PC-9 (cell line): ENCODE measurements at regions of chr11 and their contacts with region 1.

Region 1: DNA sequence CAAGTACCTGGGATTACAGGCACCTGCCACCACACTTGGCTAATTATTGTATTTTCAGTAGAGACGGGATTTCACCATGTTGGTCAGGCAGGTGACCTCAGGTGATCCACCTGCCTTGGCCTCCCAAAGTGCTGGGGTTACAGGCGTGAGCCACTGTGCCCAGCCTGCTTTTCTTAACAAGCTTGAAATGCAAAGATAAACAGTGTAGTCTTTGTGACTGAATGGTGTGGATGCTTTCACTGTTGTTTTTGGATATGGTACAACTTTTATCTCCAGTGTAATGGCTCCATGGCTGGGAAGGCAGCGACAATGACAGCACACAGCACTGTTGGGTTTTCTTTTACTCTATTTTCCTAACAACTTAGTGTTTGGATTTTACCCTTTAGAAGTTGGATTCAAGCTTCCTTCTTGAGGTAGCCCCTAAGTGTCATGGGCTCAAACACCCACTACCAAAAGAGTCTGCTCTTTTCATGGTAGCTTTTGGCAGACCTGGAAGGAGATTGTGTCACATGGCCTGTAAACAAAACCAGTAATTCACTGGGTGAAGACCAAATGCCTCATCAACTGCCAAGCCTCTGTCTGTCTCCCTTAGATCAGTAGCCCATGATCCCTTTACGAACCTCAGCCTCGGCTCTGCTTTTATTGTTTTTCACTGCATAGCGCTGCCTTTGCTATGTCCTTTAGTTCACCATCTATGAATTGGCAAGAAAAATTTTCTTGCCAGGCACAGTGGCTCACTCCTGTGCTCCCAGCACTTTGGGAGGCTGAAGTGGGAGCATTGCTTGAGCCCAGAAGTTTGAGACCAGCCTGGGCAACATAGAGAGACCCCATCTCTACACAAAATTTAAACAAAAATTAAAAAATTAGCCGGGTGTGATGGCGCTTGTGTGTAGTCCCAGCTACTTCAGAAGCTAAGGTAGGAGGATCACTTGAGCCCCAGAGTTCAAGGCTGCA is 6.4 kb downstream of the VPS51 start:
- DNase-seq: no peak
- H3K4me3 ChIP-seq: no peak overlapping the region
- H3K27ac ChIP-seq: no peak overlapping the region
- H3K4me1 ChIP-seq: peaks cover 10% of the 10 kb centered on the region
- H3K27me3 ChIP-seq: no peaks in the 10 kb centered on the region
- CTCF ChIP-seq: no peak

Region 2: DNA sequence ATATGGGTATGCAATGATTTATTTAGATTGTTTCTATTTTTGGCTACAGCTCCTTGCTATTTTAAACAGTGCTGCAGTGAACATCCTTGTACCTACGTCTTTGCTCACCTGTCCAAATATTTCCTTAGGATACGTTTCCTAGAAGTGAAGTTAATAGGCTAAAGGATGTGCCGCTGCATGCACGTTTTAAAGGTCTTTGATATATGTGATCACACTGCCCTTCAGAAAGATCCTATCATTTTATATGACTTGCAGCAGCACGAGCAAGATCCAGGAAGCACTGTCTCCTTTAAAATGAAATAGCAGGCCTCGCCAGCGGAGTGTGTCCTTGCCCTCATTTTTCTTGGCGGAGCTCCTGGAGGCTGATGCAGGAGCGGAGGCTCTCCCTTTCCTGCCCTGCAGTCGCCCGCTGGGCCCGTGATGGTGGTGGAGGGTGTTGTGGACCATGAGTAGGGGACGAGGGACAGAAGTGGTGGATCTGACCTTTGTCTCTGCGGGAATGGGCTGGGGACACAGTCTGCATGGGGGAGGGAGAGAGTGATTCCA is 724.0 kb before region 1 on chr11:
- CTCF ChIA-PET with region 1: interaction called, 15 read pairs
- POLR2A ChIA-PET with region 1: no interaction called
- intact Hi-C with region 1: no loop called
- DNase-seq: no peak
- H3K4me3 ChIP-seq: no peak overlapping the region
- H3K27ac ChIP-seq: no peak overlapping the region
- H3K4me1 ChIP-seq: peaks cover 11% of the 10 kb centered on the region
- H3K27me3 ChIP-seq: no peaks in the 10 kb centered on the region
- CTCF ChIP-seq: no peak

Region 3: GRCh38 chr11:64688534-64688982 is 413.9 kb before region 1 on chr11:
- CTCF ChIA-PET with region 1: no interaction called
- POLR2A ChIA-PET with region 1: no interaction called
- intact Hi-C with region 1: no loop called
- DNase-seq: peak; percentile 60 to 89
- H3K4me3 ChIP-seq: peak overlapping the region; percentile 45; the same call in 1 of the 2 replicates
- H3K27ac ChIP-seq: no peak overlapping the region
- H3K4me1 ChIP-seq: no peaks in the 10 kb centered on the region
- H3K27me3 ChIP-seq: peaks cover 54% of the 10 kb centered on the region
- CTCF ChIP-seq: peak; percentile 94

Region 4: DNA sequence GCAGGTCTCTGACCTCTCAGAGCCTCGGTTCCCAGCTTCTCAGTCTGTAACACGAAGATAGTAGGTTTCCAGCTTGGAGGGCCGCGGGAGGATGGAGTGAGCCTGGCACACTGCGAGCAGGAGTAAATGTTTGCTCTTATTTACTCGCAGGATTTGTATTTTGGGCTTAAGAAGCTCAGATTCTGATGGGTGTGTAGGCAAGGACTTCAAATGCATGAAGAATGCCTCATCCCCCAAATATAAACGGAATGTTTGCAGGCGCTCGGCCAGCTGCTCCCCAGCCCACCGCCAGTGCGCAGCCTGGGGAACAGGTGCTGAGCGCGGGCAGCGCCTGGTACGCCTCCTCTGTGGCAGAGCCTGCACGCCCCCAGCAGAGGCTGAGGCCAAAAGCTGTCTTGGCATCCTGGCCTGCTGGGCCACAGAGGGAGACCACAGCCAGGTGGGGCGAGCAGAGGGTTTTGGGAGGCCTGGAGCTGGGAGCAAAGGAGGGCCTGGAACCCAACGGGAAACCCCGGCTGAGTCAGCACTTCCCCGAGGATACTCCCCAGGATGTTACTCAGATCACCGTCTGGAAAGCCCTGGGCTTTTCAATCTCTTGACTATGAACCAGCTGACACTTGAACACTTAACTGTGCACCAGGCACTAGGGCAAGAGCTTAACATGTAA is 233.4 kb before region 1 on chr11:
- CTCF ChIA-PET with region 1: no interaction called
- POLR2A ChIA-PET with region 1: no interaction called
- intact Hi-C with region 1: no loop called
- DNase-seq: peak; percentile 55 to 88
- H3K4me3 ChIP-seq: no peak overlapping the region
- H3K27ac ChIP-seq: 0 out of 2 replicates have a peak overlapping the region, but pooled peaks have one; percentile 17
- H3K4me1 ChIP-seq: peaks cover 57% of the 10 kb centered on the region
- H3K27me3 ChIP-seq: no peaks in the 10 kb centered on the region
- CTCF ChIP-seq: no peak

Region 5: GRCh38 chr11:65169164-65169641 is 66.8 kb after region 1 on chr11:
- CTCF ChIA-PET with region 1: no interaction called
- POLR2A ChIA-PET with region 1: no interaction called
- intact Hi-C with region 1: no loop called
- DNase-seq: no peak
- H3K4me3 ChIP-seq: no peak overlapping the region
- H3K27ac ChIP-seq: no peak overlapping the region
- H3K4me1 ChIP-seq: no peaks in the 10 kb centered on the region; the same call in 1 of the 2 replicates
- H3K27me3 ChIP-seq: no peaks in the 10 kb centered on the region
- CTCF ChIP-seq: no peak

Region 6: GRCh38 chr11:65625628-65626342 is 523.4 kb after region 1 on chr11:
- CTCF ChIA-PET with region 1: no interaction called
- POLR2A ChIA-PET with region 1: no interaction called
- intact Hi-C with region 1: no loop called
- DNase-seq: peak in 1 of 2 experiments; percentile 26
- H3K4me3 ChIP-seq: no peak overlapping the region
- H3K27ac ChIP-seq: no peak overlapping the region
- H3K4me1 ChIP-seq: no peaks in the 10 kb centered on the region
- H3K27me3 ChIP-seq: no peaks in the 10 kb centered on the region
- CTCF ChIP-seq: peak; percentile 55